Right ventricle myocardium inferior (tissue), 1 donor: ENCODE measurements at regions of chr17 and their contacts with region 1.

Region 1: GRCh38 chr17:65055348-65056261 is 935 bp downstream of the GNA13 start:
- DNase-seq: peak; percentile 85
- ATAC-seq: peak; percentile 29

Region 2: GRCh38 chr17:64975329-64976087 is 80.1 kb before region 1 on chr17:
- intact Hi-C with region 1: loop called (anchors 1 kb)
- DNase-seq: peak; percentile 98
- ATAC-seq: peak; percentile 98

Region 3: DNA sequence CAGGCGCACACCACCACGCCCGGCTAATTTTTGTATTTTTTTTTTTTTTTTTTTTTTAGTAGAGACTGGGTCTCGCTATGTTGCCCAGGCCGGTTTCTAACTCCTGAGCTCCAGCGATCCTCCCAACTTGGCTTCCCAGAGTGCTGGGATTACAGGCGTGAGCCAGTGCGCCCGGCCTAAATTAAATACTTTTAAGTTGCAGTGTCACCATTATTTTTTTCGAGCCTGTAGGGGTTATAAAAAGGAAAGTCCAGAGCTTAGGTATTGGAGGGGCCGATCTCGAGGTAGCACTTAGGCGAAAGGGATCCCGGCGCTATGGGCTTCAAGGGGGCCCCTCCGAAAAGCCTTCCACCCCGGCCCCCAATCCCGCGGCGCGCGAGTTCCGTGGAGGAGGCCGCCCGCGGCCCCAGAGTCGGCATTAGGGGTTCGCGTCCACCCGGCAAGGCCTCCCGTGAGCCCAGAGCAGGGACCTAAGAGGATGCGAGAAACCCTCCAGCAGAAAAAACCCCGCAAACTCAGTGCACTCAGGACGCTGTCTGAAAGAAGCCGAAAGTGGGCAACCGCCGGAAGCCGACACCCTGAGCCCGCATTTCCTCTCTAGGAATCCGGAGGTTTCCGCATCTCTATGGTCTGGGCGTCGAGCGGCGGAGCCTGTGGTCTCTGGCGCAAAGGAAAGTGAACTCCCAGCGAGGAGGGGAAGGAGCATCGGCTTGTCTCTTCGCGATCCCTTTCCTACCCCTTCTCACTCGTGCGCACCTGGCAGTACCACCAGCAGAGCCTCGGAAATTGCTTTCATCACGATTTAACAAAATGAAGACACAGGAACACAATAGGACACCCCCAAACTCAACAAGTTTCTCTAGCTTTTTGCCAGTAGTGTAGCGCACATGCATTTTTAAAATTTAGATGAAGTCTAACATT is 67.5 kb after region 1 on chr17:
- intact Hi-C with region 1: loop called (anchors 5 kb)
- DNase-seq: peak; percentile 86
- ATAC-seq: peak; percentile 94